ENCODE measurements at regions of chr3 and their contacts with region 1.

Region 1: DNA sequence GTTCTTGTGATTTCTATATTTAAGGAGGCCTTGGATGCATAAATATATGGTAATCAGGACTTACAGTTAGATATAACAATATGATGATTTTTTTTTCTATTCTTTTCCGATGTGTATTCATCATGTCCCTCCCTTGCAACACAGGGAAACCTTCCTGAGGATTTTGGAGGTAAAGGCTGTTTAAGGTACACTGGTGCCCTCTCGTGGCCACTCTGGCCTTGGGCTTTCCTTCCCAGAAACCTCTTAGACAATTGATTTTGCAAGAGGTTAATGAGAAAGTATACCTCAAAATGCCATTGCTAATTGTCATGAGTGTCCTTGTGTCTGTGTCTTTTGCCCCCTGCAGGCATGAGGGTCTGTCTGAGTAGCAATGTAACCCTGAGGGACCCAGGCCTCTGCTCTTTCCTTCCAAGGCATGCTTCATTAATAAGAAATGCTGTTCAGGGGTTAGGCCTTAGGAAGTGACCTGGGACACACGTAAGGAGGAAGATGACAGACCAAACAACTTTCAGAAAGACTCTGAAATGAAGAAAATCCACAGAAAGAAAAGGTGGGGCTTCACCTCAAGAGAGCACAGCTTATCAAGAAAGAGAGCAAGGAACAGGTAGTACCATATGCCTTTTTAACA is 70.3 kb upstream of the PPP2R3A start:
- DNase-seq: peak; percentile 74
- ATAC-seq: peak in 1 of 2 donors; percentile 45

Region 2: GRCh38 chr3:134600685-134601463 is 1294.3 kb before region 1 on chr3:
- intact Hi-C with region 1: loop called (anchors 2 to 10 kb)
- DNase-seq: peak; percentile 68
- ATAC-seq: peak; percentile 72 to 73

Region 3: DNA sequence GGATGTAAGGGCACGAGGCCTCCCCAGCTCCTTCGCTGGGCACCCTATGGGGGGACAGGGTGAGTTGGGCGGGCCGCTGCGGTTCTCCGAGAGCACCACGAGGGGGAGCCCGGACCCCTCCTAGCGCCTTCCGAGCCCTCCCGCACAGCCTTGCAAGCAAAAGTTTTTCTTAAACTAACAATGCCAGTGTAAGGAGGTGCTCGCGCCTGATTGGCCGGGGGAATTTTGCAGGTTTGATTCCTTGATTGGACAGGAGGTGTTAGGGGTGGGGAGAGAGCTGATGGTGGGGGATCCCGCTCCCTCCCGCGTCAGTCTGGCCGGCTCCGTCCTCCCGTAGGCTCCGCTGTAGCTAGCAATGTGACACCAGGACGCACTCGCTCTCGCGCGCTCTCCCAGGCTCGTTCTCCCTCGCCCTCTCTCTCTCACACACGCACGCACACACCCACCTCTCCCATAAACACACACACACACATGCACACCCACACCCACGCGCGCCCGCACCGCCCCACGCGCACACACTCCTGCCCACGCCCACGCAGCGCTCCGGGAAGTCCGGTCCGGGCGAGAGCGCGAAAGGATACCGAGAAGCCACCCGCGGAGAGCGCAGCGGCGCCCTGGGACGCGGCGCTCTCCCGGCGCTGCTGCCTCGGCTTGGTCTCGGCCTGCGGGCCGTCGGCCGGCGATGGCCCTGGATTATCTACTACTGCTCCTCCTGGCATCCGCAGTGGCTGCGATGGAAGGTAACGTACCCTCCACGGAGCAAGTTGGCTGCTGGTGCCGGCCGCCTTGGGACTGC is 1100.1 kb before region 1 on chr3 and contains the start of gene EPHB1:
- intact Hi-C with region 1: loop called (anchors 2 to 5 kb)
- DNase-seq: peak; percentile 72
- ATAC-seq: peak; percentile 86 to 91
- total RNA-seq, gene EPHB1: 0.85 to 1.7 TPM

Region 4: GRCh38 chr3:135503760-135504686 is 391.2 kb before region 1 on chr3:
- intact Hi-C with region 1: loop called in 1 of 2 experiments (anchors 10 kb)
- DNase-seq: peak; percentile 63
- ATAC-seq: peak; percentile 55 to 74

Measured in left cardiac atrium (tissue), 4 donors.